ENCODE measurements at regions of chr3 and their contacts with region 1.

Region 1: DNA sequence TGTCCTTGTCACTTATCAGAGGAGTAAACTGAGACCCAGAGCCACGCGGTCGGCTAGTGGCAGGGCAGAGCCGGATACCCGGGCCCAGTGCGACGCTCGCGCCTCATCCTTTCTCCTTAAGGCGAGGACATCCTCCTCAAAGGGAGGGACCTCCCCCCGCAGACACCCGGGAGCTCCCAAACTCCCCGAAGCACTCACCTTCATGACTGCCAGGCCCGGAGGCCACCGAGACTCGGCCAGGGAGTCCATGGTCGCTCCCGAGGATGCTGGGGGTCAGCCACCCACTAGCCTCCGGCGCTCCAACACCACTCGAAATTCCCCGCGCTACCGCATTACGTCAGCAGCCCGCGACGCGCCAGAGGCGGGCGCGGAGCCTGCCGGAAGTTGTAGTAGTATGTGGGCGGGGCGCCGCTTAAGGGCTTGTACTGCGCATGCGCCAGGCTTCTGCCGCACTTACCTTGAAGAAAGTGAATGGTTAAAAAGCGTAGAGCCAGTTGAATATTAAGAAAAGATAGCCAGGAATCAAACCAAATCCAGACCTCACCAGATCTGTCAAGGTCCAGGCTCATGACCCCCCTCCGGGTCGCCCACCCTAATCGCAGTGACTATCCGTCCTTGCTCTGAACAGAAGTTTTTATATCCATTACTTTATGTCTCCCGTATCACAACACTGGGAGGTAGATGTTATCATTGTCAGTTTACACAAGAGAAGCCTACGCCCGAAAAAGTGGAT is at the start of gene RAD18:
- DNase-seq: peak; percentile 95
- H3K4me3 Mint-ChIP-seq: peak within 1 kb of the TSS; percentile 97
- H3K27ac Mint-ChIP-seq: peak within 1 kb of the TSS; percentile 93
- H3K4me1 Mint-ChIP-seq: peaks cover 27% of the 10 kb centered on the region
- H3K27me3 Mint-ChIP-seq: no peaks in the 10 kb centered on the region
- total RNA-seq, gene RAD18: 38.1 to 41.9 TPM

Region 2: DNA sequence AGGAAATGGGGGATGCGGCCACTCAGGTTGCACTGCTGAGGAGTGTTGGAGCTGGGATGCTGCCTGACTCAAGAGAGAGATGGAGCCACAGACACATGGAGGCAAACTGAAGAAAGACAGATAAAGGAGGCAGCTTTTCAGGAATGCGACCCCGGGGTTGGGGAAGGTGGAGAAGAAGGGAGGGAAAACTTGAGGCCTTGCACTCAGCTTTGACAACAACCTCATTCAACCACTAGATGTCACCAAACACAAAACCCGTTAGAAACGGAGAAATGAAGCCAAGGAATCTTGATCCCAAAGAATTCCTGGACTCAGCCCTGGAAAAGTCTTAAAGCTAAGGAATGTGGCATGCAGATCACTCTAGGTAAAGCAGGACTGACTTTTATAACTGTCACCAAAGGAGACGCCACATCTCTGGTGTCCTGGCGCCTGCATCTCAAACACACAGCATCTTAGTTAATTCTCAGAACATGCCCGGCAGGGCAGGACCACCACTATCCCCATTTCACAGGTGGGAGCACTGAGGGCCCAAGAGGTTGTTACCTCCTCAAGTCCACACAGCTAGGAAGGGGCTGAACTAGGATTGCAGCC is 521.2 kb before region 1 on chr3:
- CTCF ChIA-PET with region 1: no interaction called
- POLR2A ChIA-PET with region 1: no interaction called
- intact Hi-C with region 1: no loop called
- DNase-seq: no peak
- H3K4me3 Mint-ChIP-seq: no peak overlapping the region
- H3K27ac Mint-ChIP-seq: no peak overlapping the region
- H3K4me1 Mint-ChIP-seq: no peaks in the 10 kb centered on the region
- H3K27me3 Mint-ChIP-seq: peaks cover 1% of the 10 kb centered on the region

Region 3: DNA sequence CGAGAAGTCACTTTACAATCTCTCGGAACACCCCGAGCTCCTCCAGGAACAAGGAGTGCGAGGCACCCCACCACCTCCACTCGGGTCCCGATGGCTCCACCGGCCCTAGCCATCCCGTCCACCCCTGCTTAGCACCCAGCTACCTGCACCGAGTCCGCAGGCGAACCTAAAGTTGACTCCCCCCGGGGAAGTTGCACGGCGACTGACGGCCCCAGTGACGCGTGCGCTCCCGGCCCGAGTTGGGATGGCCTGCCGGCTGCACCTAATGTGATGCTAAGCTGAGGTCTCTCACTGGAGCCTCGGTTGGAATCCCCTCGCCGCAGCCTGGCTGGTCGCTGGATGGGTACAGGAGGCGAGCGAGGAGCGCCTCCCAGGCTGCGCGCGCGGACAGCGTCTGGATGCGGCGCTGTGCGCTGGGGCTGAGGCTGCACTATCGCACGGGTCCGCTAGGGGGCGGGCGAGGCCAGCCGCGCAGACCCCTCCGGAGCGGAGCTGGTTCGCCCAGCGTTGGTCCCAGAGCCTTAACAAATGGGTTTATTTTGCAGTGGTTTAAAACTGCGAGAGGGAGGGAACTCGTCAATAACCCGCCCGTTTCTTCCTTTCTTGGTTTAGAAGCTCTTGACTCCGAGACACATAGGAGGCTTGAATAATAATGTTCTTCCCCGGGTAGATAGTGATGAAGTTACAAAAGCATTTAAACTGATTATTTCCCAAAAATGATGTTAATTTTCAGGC is 194.0 kb before region 1 on chr3 and contains the start of gene OXTR:
- CTCF ChIA-PET with region 1: no interaction called
- POLR2A ChIA-PET with region 1: no interaction called
- intact Hi-C with region 1: loop called (anchors 5 kb)
- DNase-seq: peak; percentile 69
- H3K4me3 Mint-ChIP-seq: peak within 1 kb of the TSS; percentile 1
- H3K27ac Mint-ChIP-seq: no peak within 1 kb of the TSS
- H3K4me1 Mint-ChIP-seq: peaks cover 15% of the 10 kb centered on the region
- H3K27me3 Mint-ChIP-seq: peaks cover 32% of the 10 kb centered on the region
- total RNA-seq, gene OXTR: 0.64 to 1.1 TPM

Region 4: DNA sequence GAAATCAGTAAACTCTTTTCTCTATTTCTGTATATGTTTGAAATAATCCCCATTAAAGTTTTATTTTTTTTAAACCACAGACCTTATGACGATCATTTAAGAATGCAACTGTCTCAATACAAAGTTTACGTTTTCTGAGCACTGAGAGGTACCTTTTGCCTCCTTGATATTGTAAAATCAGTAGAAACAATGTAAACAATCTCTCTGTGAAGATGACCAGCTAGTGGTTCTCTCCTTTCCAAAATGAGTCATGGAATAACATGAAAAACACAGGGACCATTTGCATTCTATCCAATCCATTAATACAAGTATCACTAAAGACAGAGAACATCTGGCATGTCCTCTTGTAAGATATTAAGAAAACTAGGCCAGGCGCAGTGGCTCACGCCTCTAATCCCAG is 48.8 kb before region 1 on chr3:
- CTCF ChIA-PET with region 1: no interaction called
- POLR2A ChIA-PET with region 1: no interaction called
- intact Hi-C with region 1: no loop called
- DNase-seq: no peak
- H3K4me3 Mint-ChIP-seq: no peak overlapping the region
- H3K27ac Mint-ChIP-seq: no peak overlapping the region
- H3K4me1 Mint-ChIP-seq: no peaks in the 10 kb centered on the region
- H3K27me3 Mint-ChIP-seq: no peaks in the 10 kb centered on the region